Activated B cell treated with CpG ODN at 0.5 μM for 24 hours (primary cell): ENCODE measurements at regions of chr12 and their contacts with region 1.

Region 1: DNA sequence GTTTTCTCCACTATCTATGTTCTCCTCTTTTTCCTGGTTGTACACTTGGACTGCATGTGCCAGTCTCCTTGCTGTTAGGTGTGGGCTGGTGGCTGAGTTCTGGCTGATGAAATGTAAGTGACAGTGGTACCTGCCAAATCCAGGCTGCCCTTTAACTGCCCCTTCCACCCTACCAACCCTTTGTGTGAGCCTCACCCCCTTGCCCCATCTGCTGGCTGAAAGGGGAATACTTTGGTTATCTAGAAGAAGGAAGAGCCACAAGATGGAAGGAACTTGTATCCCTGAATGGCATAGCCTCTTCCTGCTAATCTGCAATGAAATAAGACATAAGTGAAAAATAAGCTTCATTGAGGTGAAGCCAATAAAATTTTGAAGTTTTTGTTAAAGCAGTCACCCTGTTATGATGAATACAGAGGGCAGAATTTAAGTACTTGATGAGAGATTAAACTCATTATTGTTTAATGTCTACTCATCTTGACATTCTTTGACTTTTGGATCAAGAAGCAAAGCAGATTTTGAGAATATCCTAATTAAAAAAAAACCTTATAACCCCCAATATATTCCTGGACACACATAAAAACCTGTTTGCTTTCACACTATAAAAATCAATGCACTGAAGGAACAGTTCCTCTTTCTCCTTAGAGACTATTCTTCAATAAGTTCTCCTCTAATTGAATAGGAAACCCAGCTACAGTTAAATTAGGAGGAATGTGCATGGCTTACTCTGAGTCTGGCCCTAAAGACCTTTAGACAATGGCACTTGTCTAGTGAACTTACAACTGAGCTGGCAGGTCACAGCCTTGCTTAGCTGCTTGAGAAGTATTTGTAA is 262.6 kb upstream of the BTG1 start:
- DNase-seq: no peak
- ATAC-seq: peak; percentile 42
- H3K4me3 Mint-ChIP-seq: peak overlapping the region; percentile 50
- H3K27ac Mint-ChIP-seq: peak overlapping the region; percentile 88
- H3K4me1 Mint-ChIP-seq: peaks cover 68% of the 10 kb centered on the region
- H3K27me3 Mint-ChIP-seq: no peaks in the 10 kb centered on the region
- CTCF ChIP-seq: no peak

Region 2: GRCh38 chr12:91577586-91578539 is 830.4 kb before region 1 on chr12:
- CTCF ChIA-PET with region 1: no interaction called
- POLR2A ChIA-PET with region 1: no interaction called
- intact Hi-C with region 1: loop called (anchors 5 kb)
- DNase-seq: no peak
- ATAC-seq: peak; percentile 58
- H3K4me3 Mint-ChIP-seq: peak overlapping the region; percentile 70
- H3K27ac Mint-ChIP-seq: no peak overlapping the region
- H3K4me1 Mint-ChIP-seq: peaks cover 6% of the 10 kb centered on the region
- H3K27me3 Mint-ChIP-seq: peaks cover 7% of the 10 kb centered on the region
- CTCF ChIP-seq: peak; percentile 57

Region 3: DNA sequence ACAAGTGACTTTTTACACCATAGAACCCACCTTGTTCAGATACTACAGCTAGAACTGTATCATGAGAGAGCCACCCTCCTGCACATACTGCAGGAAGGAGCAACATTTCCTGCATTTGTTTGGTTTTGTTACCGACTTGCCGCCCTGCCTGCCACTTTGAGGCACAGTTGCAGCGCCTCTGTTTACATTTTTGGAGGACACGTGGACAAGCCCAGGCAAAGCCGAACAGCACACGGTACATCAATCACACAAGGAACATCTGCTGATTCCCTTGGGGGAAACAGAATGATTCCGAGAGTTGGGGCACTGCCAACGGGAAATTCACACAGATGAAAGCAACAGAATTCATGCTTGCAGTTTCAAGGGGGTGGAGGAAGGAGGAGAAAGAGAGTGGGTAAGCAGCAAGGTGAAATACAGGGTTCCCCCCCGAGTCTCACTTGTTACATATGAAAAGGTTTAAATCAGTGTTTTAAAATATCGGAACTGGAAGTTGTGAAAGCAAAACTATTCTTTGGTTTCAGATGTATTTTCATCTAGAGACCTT is 373.4 kb before region 1 on chr12:
- CTCF ChIA-PET with region 1: no interaction called
- POLR2A ChIA-PET with region 1: no interaction called
- intact Hi-C with region 1: loop called (anchors 5 kb)
- DNase-seq: peak; percentile 50
- ATAC-seq: peak; percentile 91
- H3K4me3 Mint-ChIP-seq: peak overlapping the region; percentile 67
- H3K27ac Mint-ChIP-seq: peak overlapping the region; percentile 86
- H3K4me1 Mint-ChIP-seq: peaks cover 65% of the 10 kb centered on the region
- H3K27me3 Mint-ChIP-seq: no peaks in the 10 kb centered on the region
- CTCF ChIP-seq: no peak

Region 4: DNA sequence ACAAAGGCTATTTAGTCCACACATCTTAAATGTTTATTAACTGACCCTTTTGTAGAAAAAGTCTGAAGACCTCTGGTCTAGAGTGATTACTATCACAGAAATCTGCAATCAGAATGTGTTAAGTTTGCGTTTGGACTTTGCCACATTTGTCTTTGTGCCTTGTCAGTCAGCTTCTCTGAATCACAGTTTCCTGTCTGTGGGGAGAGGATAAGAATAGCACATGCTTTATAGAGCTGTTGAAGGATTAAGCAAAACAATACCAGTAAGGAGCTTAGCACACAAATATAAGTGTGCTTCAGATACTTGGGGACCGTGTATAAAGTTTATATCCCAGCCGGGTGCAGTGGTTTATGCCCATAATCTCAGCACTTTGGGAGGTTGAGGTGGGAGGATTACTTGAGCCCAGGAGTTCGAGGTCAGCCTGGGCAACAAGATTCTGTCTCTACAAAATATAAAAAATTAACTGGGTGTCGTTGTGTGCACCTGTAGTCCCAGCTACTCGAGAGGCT is 199.6 kb before region 1 on chr12:
- CTCF ChIA-PET with region 1: no interaction called
- POLR2A ChIA-PET with region 1: interaction called, 13 read pairs
- intact Hi-C with region 1: no loop called
- DNase-seq: no peak
- ATAC-seq: peak; percentile 84
- H3K4me3 Mint-ChIP-seq: peak overlapping the region; percentile 61
- H3K27ac Mint-ChIP-seq: peak overlapping the region; percentile 70
- H3K4me1 Mint-ChIP-seq: peaks cover 28% of the 10 kb centered on the region
- H3K27me3 Mint-ChIP-seq: no peaks in the 10 kb centered on the region
- CTCF ChIP-seq: no peak

Region 5: DNA sequence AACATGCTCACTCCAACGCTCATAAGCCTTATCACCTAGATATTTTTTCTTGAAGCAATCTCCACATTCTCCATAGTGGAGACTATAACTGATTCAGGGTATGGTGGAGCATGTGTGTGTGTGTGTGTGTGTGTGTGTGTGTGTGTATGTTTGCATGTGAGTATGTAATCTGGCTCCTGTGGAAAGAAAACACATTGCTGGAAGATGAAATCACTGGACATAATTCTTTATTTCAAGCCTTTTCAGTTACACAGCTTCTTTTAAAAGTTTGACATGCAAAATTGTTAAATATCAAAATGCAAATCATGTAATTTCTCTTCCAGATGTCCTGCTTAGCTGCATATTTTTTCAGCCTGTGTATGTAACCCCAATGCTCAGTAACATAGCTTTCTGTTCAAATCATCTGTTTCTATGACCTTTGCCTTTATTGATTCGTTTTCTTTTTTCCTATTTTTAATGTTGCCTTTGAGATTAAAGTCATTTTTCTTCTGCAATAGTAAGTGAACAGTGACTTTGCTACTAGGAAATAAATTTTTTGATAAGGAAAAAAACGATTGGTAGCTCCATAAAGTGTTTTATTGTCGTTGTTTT is 182.1 kb before region 1 on chr12:
- CTCF ChIA-PET with region 1: no interaction called
- POLR2A ChIA-PET with region 1: no interaction called
- intact Hi-C with region 1: no loop called
- DNase-seq: no peak
- ATAC-seq: no peak
- H3K4me3 Mint-ChIP-seq: no peak overlapping the region
- H3K27ac Mint-ChIP-seq: no peak overlapping the region
- H3K4me1 Mint-ChIP-seq: no peaks in the 10 kb centered on the region
- H3K27me3 Mint-ChIP-seq: no peaks in the 10 kb centered on the region
- CTCF ChIP-seq: no peak

Region 6: DNA sequence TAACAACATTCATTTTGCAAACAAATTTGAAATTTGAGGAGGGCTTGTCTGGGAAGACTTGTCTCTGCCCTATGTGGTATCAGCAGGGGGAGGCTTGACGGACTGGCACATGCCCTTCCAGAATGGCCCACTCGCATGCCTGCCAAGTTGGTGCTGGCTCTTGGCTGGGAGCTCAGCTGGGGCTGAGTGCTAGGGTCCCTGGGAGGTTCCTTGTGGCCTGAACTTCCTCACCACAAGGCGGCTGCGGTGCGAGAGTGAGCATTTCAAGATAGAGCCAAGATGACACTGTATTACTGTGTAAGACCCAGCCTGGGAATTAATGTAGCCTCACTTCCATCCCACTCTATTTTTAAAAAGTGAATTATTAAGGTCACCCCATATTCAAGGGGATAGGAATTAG is 22.9 kb after region 1 on chr12:
- CTCF ChIA-PET with region 1: interaction called, 5 read pairs
- POLR2A ChIA-PET with region 1: interaction called, 9 read pairs
- intact Hi-C with region 1: loop called (anchors 2 kb)
- DNase-seq: peak; percentile 27
- ATAC-seq: peak; percentile 60
- H3K4me3 Mint-ChIP-seq: no peak overlapping the region
- H3K27ac Mint-ChIP-seq: peak overlapping the region; percentile 94
- H3K4me1 Mint-ChIP-seq: peaks cover 80% of the 10 kb centered on the region
- H3K27me3 Mint-ChIP-seq: no peaks in the 10 kb centered on the region
- CTCF ChIP-seq: no peak

Region 7: GRCh38 chr12:92505254-92506231 is 97.3 kb after region 1 on chr12:
- CTCF ChIA-PET with region 1: interaction called, 3 read pairs
- POLR2A ChIA-PET with region 1: interaction called, 16 read pairs
- intact Hi-C with region 1: loop called (anchors 2 kb)
- DNase-seq: peak; percentile 20
- ATAC-seq: peak; percentile 47
- H3K4me3 Mint-ChIP-seq: peak overlapping the region; percentile 77
- H3K27ac Mint-ChIP-seq: peak overlapping the region; percentile 94
- H3K4me1 Mint-ChIP-seq: peaks cover 64% of the 10 kb centered on the region
- H3K27me3 Mint-ChIP-seq: no peaks in the 10 kb centered on the region
- CTCF ChIP-seq: no peak